ENCODE measurements at regions of chr12 and their contacts with region 1.

Region 1: GRCh38 chr12:29901585-29901984 is 117.8 kb upstream of the TMTC1 start:
- DNase-seq: peak; percentile 54
- ATAC-seq: peak; percentile 72
- H3K4me3 Mint-ChIP-seq: no peak overlapping the region
- H3K27ac Mint-ChIP-seq: no peak overlapping the region
- H3K4me1 Mint-ChIP-seq: peaks cover 9% of the 10 kb centered on the region; the same call in 1 of the 2 replicates
- H3K27me3 Mint-ChIP-seq: no peaks in the 10 kb centered on the region
- CTCF ChIP-seq: peak; percentile 29

Region 2: GRCh38 chr12:29519585-29520182 is 381.9 kb before region 1 on chr12:
- CTCF ChIA-PET with region 1: no interaction called
- POLR2A ChIA-PET with region 1: no interaction called
- DNase-seq: no peak
- ATAC-seq: no peak
- H3K4me3 Mint-ChIP-seq: no peak overlapping the region
- H3K27ac Mint-ChIP-seq: no peak overlapping the region
- H3K4me1 Mint-ChIP-seq: no peaks in the 10 kb centered on the region
- H3K27me3 Mint-ChIP-seq: no peaks in the 10 kb centered on the region
- CTCF ChIP-seq: peak; percentile 33; the same call in 1 of the 2 replicates

Region 3: GRCh38 chr12:29552324-29552927 is 349.2 kb before region 1 on chr12:
- CTCF ChIA-PET with region 1: interaction called, 11 read pairs
- POLR2A ChIA-PET with region 1: interaction called, 3 read pairs
- DNase-seq: peak; percentile 82
- ATAC-seq: peak; percentile 94
- H3K4me3 Mint-ChIP-seq: no peak overlapping the region
- H3K27ac Mint-ChIP-seq: no peak overlapping the region
- H3K4me1 Mint-ChIP-seq: peaks cover 25% of the 10 kb centered on the region
- H3K27me3 Mint-ChIP-seq: no peaks in the 10 kb centered on the region
- CTCF ChIP-seq: peak; percentile 84

Region 4: DNA sequence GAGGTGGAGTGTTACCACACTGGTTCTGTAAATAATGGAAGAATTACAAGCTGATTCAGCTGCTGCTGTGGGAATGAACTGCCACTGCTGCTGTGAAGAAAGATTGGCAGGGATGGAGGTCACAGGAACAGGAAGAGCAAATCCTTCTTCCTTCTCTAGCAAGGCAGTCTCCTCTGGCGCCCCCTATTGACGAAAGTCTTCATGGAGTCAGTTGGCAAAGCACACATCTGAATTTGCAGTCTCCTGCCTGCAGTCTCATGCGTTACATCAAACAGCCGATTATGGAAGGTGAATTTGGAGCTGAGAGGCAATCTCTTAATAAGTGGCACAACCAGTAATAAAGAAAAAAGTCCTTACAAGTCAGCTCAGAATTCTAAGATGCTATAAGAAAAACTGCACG is 11.8 kb before region 1 on chr12:
- CTCF ChIA-PET with region 1: interaction called, 23 read pairs
- POLR2A ChIA-PET with region 1: no interaction called
- DNase-seq: peak; percentile 86
- ATAC-seq: peak; percentile 76
- H3K4me3 Mint-ChIP-seq: no peak overlapping the region
- H3K27ac Mint-ChIP-seq: no peak overlapping the region
- H3K4me1 Mint-ChIP-seq: peaks cover 11% of the 10 kb centered on the region
- H3K27me3 Mint-ChIP-seq: peaks cover 2% of the 10 kb centered on the region; the same call in 1 of the 2 replicates
- CTCF ChIP-seq: peak; percentile 80

Measured in WTC11 (cell line).